ENCODE measurements at regions of chr4 and their contacts with region 1.

Region 1: GRCh38 chr4:2186133-2186864 is 55.6 kb downstream of the HAUS3 start:
- DNase-seq: no peak
- H3K4me3 ChIP-seq: no peak overlapping the region
- H3K27ac ChIP-seq: no peak overlapping the region
- H3K4me1 ChIP-seq: no peaks in the 10 kb centered on the region
- H3K27me3 ChIP-seq: no peaks in the 10 kb centered on the region
- CTCF ChIP-seq: peak; percentile 43

Region 2: GRCh38 chr4:1910643-1911042 is 275.7 kb before region 1 on chr4:
- intact Hi-C with region 1: loop called (anchors 10 kb)
- DNase-seq: peak; percentile 55
- H3K4me3 ChIP-seq: no peak overlapping the region
- H3K27ac ChIP-seq: no peak overlapping the region
- H3K4me1 ChIP-seq: peaks cover 10% of the 10 kb centered on the region
- H3K27me3 ChIP-seq: no peaks in the 10 kb centered on the region
- CTCF ChIP-seq: peak; percentile 42